ENCODE measurements at regions of chr13 and their contacts with region 1.

Region 1: DNA sequence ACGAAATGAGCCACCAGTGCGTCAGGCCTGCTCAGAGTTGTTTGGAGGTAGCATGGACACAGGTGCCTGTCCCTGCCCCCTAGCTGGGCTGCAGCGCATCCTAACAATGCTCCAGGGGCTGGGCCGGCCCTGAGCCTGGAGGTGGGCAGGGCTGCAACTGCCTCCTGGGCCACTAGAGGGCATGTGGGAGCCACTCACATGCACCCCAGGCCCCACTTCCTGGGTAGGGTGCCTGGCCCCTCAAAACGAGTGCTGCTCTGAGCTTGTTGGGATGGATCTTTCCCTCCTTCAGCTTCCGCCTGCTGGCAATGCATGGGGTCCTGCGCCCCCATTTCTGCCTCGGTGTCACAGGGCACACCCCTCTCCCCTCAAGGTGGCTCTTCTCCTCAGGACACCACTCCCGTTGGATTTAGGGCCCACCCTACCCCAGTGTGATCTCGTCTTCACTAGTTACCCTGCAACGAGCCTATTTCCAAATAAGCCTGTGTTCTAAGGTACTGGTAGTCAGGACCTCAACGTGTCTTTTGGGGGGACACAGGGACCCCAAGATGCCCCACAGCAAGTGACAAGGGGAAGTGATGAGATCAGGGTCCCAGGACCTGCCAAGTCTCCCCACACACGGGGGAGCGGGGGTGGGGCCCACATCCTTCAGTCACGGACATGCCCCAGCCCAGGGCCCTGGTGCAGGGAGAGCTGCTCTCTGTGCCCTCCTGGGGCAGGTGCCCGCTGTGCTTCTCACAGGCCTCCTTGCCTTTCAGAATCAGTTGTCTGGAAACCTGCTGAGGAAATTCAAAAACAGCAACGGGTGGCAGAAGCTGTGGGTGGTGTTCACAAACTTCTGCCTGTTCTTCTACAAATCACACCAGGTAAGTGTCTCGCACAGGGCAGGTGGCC is 131.3 kb downstream of the STK24 start:
- DNase-seq: peak; percentile 66

Region 2: GRCh38 chr13:98517576-98518310 is 72.2 kb after region 1 on chr13:
- in situ Hi-C with region 1: no loop called
- DNase-seq: no peak

Region 3: DNA sequence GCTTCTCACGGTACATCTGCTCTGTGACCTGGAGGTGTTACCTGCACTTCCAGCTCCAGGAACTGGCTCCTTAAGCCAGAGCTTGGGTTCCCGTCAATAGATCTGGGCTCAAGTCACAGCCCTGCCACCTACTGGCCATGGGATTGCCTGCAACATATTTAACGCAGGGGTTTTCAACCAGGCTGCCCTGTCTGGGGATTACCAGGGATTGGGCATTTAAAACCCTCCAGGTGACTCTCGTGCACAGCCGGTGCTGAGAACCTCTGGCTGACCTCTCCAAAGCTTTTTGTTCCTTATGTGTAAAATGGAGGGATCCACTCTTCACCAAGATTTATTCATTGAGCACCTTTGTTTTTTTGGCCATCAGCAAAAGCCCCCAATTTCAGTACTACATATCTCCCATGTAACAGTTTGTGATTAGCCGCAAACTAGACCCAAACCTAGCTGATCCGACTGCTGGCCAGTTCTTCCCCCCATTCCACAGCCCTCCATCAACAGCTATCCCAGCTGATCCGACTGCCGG is 207.9 kb after region 1 on chr13:
- in situ Hi-C with region 1: loop called (anchors 25 kb)
- DNase-seq: peak; percentile 89